Endothelial cell of umbilical vein (primary cell): ENCODE measurements at regions of chr1 and their contacts with region 1.

Region 1: DNA sequence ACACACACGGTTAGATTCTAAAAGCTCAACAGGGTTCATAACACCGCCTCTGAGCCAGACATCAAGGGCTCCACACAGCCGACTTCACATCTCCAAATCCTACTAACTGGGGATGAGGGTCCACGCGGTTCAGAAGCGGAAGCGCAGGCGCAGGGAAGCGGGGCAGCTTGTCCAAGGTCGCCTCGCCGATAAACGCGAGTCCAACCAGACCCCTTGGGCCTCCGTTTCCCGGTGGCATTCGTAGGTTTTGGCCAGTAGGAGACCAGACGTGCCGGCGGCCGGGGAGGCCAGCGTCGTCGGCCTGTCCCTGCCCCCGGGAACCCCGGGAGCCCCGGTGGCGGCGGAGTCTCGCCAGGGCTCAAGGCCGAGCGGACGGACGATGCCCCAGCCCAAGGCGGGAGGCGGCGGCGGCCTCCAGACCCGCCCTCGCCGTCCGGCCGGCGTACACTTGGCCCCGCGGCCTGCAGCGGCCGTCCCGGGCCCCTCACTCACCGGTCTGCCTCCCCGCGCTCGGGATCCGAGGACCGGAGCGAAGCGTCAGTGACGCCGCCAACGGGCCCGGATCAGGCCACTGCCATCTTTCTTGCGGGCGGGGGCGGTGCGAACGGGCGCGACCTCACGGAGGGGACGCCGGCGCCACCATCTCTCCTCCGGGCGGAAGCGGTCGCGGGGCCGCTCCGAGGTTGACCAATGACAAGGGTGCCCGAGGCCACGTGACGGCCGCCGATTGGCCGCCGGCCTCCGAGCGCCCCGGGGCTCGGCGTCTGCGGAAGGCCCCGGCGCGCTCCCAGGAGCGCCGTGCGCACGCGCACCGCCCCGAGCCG is at the start of gene SDF4:
- DNase-seq: peak; percentile 97
- H3K4me3 ChIP-seq: peak within 1 kb of the TSS; percentile 54 to 88 (median 80)
- H3K27ac ChIP-seq: peak within 1 kb of the TSS; percentile 39
- H3K4me1 ChIP-seq: peaks cover 6% of the 10 kb centered on the region
- H3K27me3 ChIP-seq: no peaks in the 10 kb centered on the region
- CTCF ChIP-seq: no peak
- POLR2A ChIP-seq: peak; percentile 94
- total RNA-seq, gene SDF4: 171 and 185 TPM in 2 replicates

Region 2: GRCh38 chr1:1033009-1033587 is 198.5 kb before region 1 on chr1:
- CTCF ChIA-PET with region 1: interaction called, 3 read pairs
- POLR2A ChIA-PET with region 1: no interaction called
- dilution Hi-C with region 1: no loop called
- intact Hi-C with region 1: loop called (anchors 1 kb)
- DNase-seq: peak; percentile 80
- H3K4me3 ChIP-seq: peak overlapping the region in 1 of 3 experiments; percentile 20
- H3K27ac ChIP-seq: no peak overlapping the region
- H3K4me1 ChIP-seq: no peaks in the 10 kb centered on the region
- H3K27me3 ChIP-seq: no peaks in the 10 kb centered on the region
- CTCF ChIP-seq: peak; percentile 76 to 90
- POLR2A ChIP-seq: no peak

Region 3: GRCh38 chr1:1157426-1157913 is 74.1 kb before region 1 on chr1:
- CTCF ChIA-PET with region 1: interaction called, 3 read pairs
- POLR2A ChIA-PET with region 1: no interaction called
- dilution Hi-C with region 1: no loop called
- intact Hi-C with region 1: loop called (anchors 1 kb)
- DNase-seq: peak; percentile 70
- H3K4me3 ChIP-seq: peak overlapping the region in 2 of 3 experiments; percentile 1 to 46
- H3K27ac ChIP-seq: peak overlapping the region; percentile 49
- H3K4me1 ChIP-seq: peaks cover 14% of the 10 kb centered on the region
- H3K27me3 ChIP-seq: no peaks in the 10 kb centered on the region
- CTCF ChIP-seq: no peak
- POLR2A ChIP-seq: peak; percentile 62

Region 4: GRCh38 chr1:1264868-1265272 is 33.3 kb after region 1 on chr1:
- CTCF ChIA-PET with region 1: no interaction called
- POLR2A ChIA-PET with region 1: no interaction called
- dilution Hi-C with region 1: no loop called
- intact Hi-C with region 1: loop called (anchors 2 kb)
- DNase-seq: peak; percentile 28
- H3K4me3 ChIP-seq: no peak overlapping the region
- H3K27ac ChIP-seq: peak overlapping the region; percentile 85
- H3K4me1 ChIP-seq: peaks cover 24% of the 10 kb centered on the region
- H3K27me3 ChIP-seq: no peaks in the 10 kb centered on the region
- CTCF ChIP-seq: peak; percentile 31 to 39
- POLR2A ChIP-seq: no peak

Region 5: DNA sequence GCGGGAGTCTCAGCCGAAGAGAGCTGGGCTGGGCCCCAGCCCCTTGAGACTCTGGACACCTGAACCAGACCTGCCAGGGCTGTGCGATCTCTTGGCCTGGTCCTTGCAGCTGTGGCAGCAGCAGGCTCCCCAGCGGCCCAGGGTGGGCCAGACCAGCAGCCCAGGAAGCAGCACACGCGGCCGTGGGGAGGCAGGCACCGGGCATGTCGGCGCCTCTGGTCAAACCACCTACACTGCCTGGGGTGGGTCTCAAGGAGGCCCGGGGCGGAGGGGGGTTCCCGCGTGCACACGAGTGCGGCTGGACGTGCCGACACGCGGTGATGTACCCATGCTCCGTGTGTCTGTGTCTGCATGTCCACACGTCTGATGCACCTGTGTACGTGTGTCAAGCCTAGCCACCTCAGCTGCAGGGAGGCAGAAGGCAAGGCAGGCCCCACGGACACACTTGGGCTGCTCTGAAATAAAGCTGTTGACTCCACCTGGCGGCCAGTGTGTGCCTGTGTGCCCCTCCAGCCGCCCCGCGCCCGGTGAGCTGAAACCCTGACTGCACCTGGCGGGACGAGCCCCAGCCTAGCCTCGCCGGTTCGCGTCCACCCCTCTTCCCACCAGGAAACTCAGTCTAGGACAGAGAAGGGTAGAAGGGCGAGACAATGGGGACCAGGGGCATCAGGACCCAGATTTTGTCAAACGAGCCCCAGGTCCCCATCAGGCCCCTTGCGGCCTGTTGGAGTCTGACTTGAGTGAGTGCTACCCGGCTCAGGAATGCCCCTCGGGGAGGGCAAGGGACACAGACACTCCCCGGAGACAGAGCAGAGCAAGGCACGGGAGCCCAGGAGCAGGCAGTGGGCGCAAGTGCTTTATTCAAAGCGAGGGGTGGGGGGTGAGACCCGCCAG is 60.2 kb after region 1 on chr1:
- CTCF ChIA-PET with region 1: interaction called, 16 read pairs
- POLR2A ChIA-PET with region 1: no interaction called
- dilution Hi-C with region 1: no loop called
- intact Hi-C with region 1: no loop called
- DNase-seq: peak; percentile 50
- H3K4me3 ChIP-seq: no peak overlapping the region
- H3K27ac ChIP-seq: no peak overlapping the region
- H3K4me1 ChIP-seq: no peaks in the 10 kb centered on the region
- H3K27me3 ChIP-seq: no peaks in the 10 kb centered on the region
- CTCF ChIP-seq: peak; percentile 73 to 83
- POLR2A ChIP-seq: no peak